ENCODE measurements at regions of chr9 and their contacts with region 1.

Region 1: DNA sequence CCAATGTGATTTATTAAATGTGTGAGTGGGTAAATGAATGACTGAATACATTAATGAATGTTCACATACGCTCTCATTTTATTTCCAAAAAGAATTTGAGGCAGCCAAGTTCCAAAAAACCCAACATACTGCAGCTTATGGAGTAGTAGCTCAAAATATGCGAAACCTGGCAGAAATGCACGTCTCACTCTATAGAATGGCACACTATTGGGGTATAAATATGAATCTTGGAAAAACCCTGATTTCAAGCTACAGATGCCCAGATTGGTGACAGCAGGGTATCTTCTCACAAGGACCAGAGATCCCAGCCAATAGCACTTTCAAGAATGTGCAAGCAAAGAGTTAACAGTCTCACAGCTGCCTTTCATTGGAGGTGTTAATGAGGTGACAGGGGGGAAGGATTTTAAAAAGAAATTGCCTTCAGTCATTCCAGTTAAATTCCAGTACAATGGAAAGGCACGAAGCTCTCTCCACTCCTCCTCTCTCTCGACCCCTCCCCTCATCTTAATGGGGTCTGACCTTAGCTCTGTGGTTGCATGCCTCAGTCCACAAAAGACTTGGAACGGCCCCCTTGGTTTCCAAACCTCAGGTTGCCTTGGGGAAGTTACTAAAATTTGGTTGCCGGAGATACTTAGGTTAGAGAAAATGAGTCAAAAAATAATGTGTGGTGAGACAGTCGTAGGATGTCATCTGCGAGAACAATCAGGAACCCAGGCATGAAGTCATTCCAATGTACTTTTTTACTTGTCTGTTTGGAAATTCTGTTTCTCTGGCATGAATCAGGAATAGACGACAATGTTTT is 307.4 kb downstream of the NFIB start:
- DNase-seq: no peak
- ATAC-seq: no peak
- H3K4me3 Mint-ChIP-seq: no peak overlapping the region
- H3K27ac Mint-ChIP-seq: no peak overlapping the region
- H3K4me1 Mint-ChIP-seq: no peaks in the 10 kb centered on the region
- H3K27me3 Mint-ChIP-seq: no peaks in the 10 kb centered on the region

Region 2: DNA sequence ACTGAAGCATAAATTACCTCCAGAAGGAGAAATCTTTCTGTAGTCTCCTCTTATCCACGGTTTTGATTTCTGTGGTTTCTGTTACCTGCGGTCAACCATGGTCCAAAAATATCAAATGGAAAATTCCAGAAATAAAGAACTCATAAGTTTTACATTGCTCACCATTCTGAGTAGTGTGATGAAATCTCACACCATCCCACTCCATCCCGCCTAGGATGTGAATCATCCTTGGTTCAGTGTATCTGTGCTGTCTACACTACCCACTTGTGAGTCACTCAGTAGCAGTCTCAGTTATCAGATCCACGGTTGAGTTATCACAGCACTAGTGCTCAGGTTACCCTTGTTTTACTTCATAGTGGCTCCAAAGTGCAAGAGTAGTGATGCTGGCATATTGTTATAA is 63.9 kb before region 1 on chr9:
- CTCF ChIA-PET with region 1: no interaction called
- POLR2A ChIA-PET with region 1: no interaction called
- intact Hi-C with region 1: loop called in 1 of 2 experiments (anchors 10 kb)
- DNase-seq: peak; percentile 61
- ATAC-seq: peak; percentile 100
- H3K4me3 Mint-ChIP-seq: no peak overlapping the region
- H3K27ac Mint-ChIP-seq: no peak overlapping the region
- H3K4me1 Mint-ChIP-seq: peaks cover 3% of the 10 kb centered on the region
- H3K27me3 Mint-ChIP-seq: peaks cover 1% of the 10 kb centered on the region